PC-3 (cell line): ENCODE measurements at regions of chr6 and their contacts with region 1.

Region 1: GRCh38 chr6:17505062-17505476 is 95.0 kb upstream of the FAM8A1 start:
- DNase-seq: peak; percentile 39
- ATAC-seq: peak; percentile 70
- H3K4me3 ChIP-seq: no peak overlapping the region
- H3K27ac ChIP-seq: no peak overlapping the region
- H3K4me1 ChIP-seq: peaks cover 10% of the 10 kb centered on the region; the same call in 1 of the 2 replicates
- H3K27me3 ChIP-seq: no peaks in the 10 kb centered on the region
- CTCF ChIP-seq: peak; percentile 58

Region 2: GRCh38 chr6:17470938-17471327 is 34.1 kb before region 1 on chr6:
- CTCF ChIA-PET with region 1: no interaction called
- POLR2A ChIA-PET with region 1: no interaction called
- intact Hi-C with region 1: no loop called
- DNase-seq: peak; percentile 9
- ATAC-seq: no peak
- H3K4me3 ChIP-seq: no peak overlapping the region
- H3K27ac ChIP-seq: no peak overlapping the region
- H3K4me1 ChIP-seq: peaks cover 31% of the 10 kb centered on the region
- H3K27me3 ChIP-seq: no peaks in the 10 kb centered on the region
- CTCF ChIP-seq: no peak

Region 3: DNA sequence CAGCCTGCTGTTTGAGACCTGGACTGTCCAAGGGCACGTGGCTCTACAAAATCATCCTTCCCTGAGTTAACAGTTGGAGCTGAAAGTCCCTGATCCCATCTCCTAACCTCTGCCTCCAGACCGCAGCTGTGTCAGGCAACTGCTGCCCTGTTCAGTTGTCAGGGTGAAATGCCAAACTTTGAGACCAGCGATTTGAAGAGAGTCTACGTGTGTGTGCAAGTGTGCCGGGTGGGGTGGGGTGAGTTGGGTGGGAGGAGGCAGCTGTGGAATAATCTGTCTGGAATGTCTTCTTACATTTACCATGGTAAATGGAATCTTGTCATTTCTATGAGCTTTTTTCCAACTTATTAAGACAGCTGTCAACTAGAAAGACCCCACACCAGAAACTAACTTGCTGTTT is 14.1 kb after region 1 on chr6:
- CTCF ChIA-PET with region 1: interaction called, 18 read pairs
- POLR2A ChIA-PET with region 1: no interaction called
- intact Hi-C with region 1: no loop called
- DNase-seq: no peak
- ATAC-seq: no peak
- H3K4me3 ChIP-seq: no peak overlapping the region
- H3K27ac ChIP-seq: no peak overlapping the region
- H3K4me1 ChIP-seq: no peaks in the 10 kb centered on the region
- H3K27me3 ChIP-seq: no peaks in the 10 kb centered on the region
- CTCF ChIP-seq: no peak